ENCODE measurements at regions of chr1 and their contacts with region 1.

Region 1: GRCh38 chr1:211698161-211699026 is 23.0 kb upstream of the NEK2 start:
- DNase-seq: peak; percentile 86
- CTCF ChIP-seq: peak; percentile 99

Region 2: GRCh38 chr1:211158866-211159265 is 539.5 kb before region 1 on chr1:
- CTCF ChIA-PET with region 1: no interaction called
- POLR2A ChIA-PET with region 1: no interaction called
- DNase-seq: no peak
- CTCF ChIP-seq: no peak

Region 3: DNA sequence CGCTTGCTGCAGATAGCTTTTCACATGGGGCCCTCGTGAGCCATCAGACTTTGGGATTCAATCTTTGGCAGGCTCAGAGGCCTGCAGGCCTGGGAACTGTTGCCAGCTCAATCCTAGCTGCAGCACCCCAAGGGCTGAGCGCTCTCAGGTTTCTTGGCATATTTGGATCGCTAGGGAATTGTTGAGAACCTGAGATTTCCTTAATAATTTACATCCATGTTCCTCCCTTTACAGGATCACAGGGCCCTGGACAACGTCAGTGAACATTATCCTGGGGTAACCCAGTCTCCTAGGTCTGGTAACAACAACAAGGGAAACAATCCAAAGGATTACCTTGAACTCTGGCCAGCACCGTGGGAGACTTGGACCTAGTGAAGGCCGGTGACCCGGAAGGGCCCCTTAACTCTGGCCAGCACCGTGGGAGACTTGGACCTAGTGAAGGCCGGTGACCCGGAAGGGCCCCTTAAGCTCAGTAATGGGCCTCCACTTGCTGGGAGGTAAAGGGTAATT is 26.3 kb after region 1 on chr1:
- CTCF ChIA-PET with region 1: interaction called, 23 read pairs
- POLR2A ChIA-PET with region 1: no interaction called
- DNase-seq: no peak
- CTCF ChIP-seq: no peak

Region 4: DNA sequence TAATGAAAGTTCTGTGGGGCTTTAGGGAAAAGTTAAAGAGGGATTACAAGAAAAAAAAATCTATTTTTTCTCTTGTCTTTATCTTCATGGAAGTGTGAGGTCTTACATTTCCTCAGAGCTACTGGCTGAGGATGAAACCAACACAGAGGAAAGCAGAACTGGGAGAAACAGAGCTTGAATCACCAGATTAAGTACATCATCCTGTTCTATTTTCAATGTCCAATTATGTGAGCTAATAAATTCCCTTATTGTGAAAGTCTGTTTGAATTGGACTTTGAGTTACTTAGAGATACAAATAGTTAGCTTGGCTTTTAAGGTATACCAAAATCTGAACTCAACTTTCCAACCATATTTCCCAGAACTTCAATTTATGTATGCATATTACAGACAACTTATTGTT is 63.0 kb after region 1 on chr1:
- CTCF ChIA-PET with region 1: interaction called, 10 read pairs
- POLR2A ChIA-PET with region 1: no interaction called
- DNase-seq: no peak
- CTCF ChIP-seq: no peak

Region 5: GRCh38 chr1:211903490-211904245 is 205.3 kb after region 1 on chr1:
- CTCF ChIA-PET with region 1: interaction called, 12 read pairs
- POLR2A ChIA-PET with region 1: no interaction called
- DNase-seq: no peak
- CTCF ChIP-seq: no peak

Region 6: GRCh38 chr1:212012034-212012740 is 313.8 kb after region 1 on chr1:
- CTCF ChIA-PET with region 1: interaction called, 15 read pairs
- POLR2A ChIA-PET with region 1: no interaction called
- DNase-seq: peak; percentile 70
- CTCF ChIP-seq: peak; percentile 92

Region 7: GRCh38 chr1:212070720-212071302 is 372.4 kb after region 1 on chr1:
- CTCF ChIA-PET with region 1: interaction called, 10 read pairs
- POLR2A ChIA-PET with region 1: no interaction called
- DNase-seq: peak; percentile 32
- CTCF ChIP-seq: peak; percentile 63